ENCODE measurements at regions of chr19 and their contacts with region 1.

Region 1: DNA sequence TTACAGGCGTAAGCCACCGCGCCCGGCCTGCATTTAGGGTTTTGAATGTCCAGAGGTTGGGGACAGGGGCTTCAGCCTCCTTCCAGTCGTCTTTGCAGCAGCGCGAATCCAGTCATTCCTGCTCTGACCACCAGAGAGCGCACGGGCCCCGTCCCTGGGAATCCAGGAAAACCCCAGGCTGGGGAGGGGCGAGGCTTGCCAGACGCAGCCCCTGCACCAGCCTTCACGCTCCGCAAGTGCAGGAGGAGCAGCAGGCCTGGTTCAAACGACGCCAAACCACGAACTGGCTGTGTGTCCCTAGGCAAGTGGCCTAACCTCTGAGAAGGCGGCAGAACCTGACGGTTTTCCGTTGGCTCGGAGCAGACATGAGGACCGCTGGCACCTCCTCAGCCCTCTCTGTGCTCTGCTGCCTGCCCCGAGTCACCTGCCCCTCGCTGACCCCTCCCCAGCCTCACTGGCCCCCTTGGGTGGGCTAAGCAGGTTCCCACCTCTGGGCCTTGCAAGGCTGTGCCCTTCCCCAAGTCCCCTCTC is 2.0 kb upstream of the RNF126 start:
- DNase-seq: peak; percentile 82 to 89 (median 88)
- ATAC-seq: peak; percentile 19
- H3K4me3 ChIP-seq: no peak overlapping the region
- H3K4me1 ChIP-seq: peaks cover 22% of the 10 kb centered on the region
- CTCF ChIP-seq: peak; percentile 90

Region 2: DNA sequence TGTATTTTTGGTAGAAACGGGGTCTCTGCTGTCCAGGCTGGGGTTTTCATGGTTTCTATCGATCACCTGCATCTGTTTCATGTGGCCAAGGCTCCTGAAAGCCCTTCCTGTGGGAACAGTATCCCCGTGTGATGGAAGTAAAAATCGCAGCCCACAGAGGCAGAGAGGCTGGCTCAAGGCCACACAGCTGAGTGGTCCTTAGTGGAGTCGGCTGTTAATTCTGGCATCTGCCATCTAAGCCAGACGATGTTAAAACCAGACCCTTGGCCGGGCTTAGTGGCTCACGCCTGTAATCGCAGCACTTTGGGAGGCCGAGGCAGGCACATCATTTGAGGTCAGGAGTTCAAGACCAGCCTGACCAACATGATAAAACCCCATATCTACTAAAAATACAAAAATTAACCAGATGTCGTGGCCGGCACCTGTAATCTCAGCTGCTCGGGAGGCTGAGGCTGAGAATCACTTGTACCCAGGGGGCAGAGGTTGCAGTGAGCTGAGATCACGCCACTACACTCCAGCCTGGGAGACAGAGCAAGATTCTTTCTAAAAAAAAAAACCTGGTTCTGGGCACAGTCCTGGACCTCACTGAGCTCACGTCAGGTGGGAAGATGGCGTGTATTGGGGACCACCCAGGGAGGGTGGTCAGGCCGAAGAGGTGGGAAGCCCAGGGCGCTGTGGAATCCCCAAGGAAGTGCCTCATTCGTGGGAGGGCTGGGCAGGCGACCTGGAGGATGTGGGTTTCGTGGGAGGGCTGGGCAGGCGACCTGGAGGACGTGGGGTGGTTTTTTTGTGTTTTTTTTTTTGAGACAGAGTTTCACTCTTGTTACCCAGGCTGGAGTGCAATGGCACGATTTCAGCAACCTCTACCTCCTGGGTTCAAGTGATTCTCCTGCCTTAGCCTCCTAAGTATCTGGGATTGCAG is 67.4 kb after region 1 on chr19:
- intact Hi-C with region 1: loop called (anchors 5 kb)
- DNase-seq: no peak
- ATAC-seq: no peak
- H3K4me3 ChIP-seq: no peak overlapping the region
- H3K4me1 ChIP-seq: peaks cover 4% of the 10 kb centered on the region
- CTCF ChIP-seq: no peak

Measured in mucosa of descending colon (tissue), 3 donors.